Activated CD4-positive, alpha-beta T cell treated with anti-CD3 and anti-CD28 coated beads for 36 hours (primary cell): ENCODE measurements at regions of chr7 and their contacts with region 1.

Region 1: DNA sequence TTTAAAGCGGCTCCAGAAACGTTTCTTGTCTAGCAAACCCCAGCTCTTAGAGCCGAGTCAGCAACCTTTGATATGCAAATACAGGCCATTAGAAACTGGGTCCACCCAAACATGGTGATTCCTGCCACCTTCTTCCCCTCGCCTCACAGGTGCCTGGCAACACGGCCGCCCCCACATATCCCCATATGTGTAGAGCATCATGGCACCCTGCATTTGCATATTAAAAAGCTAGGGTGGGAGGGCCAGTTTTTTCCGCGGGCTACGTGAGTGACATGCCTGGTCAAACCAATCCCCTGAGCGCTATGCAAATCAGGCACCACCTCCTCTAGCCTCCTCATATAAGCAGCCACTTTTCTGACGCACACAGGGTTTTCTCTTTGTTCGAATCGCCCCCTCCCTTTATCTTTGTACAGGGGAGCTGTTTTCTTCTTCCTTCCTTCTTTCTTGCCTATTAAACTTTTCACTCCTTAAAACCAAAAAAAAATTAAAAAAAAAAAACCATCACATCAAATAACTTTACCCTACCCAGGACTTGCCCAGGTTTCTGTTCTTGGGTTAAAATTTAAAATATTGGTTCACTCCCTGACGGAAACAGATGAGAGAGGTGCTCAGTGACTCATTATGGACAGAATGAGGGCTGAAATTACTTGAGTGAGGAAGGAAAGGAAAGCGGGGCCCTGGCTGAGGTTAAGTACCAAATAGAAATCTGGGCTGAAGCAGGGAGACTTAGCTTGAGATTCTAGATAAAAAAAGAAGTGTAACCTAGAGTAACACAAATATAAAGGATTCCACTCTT is 59.8 kb downstream of the COA1 start:
- DNase-seq: peak; percentile 93
- ATAC-seq: peak; percentile 85
- H3K4me3 Mint-ChIP-seq: peak overlapping the region; percentile 68
- H3K27ac Mint-ChIP-seq: peak overlapping the region; percentile 94
- H3K4me1 Mint-ChIP-seq: peaks cover 84% of the 10 kb centered on the region
- H3K27me3 Mint-ChIP-seq: no peaks in the 10 kb centered on the region

Region 2: GRCh38 chr7:43568529-43568928 is 101.0 kb before region 1 on chr7:
- CTCF ChIA-PET with region 1: no interaction called
- POLR2A ChIA-PET with region 1: no interaction called
- intact Hi-C with region 1: no loop called
- DNase-seq: no peak
- ATAC-seq: no peak
- H3K4me3 Mint-ChIP-seq: no peak overlapping the region
- H3K27ac Mint-ChIP-seq: no peak overlapping the region
- H3K4me1 Mint-ChIP-seq: peaks cover 22% of the 10 kb centered on the region
- H3K27me3 Mint-ChIP-seq: peaks cover 4% of the 10 kb centered on the region

Region 3: GRCh38 chr7:43631559-43631958 is 37.9 kb before region 1 on chr7:
- CTCF ChIA-PET with region 1: no interaction called
- POLR2A ChIA-PET with region 1: no interaction called
- intact Hi-C with region 1: loop called in 1 of 2 experiments (anchors 1 kb)
- DNase-seq: no peak
- ATAC-seq: peak; percentile 70
- H3K4me3 Mint-ChIP-seq: no peak overlapping the region
- H3K27ac Mint-ChIP-seq: peak overlapping the region; percentile 79
- H3K4me1 Mint-ChIP-seq: peaks cover 90% of the 10 kb centered on the region
- H3K27me3 Mint-ChIP-seq: no peaks in the 10 kb centered on the region

Region 4: GRCh38 chr7:43658718-43659548 is 10.6 kb before region 1 on chr7:
- CTCF ChIA-PET with region 1: interaction called, 4 read pairs
- POLR2A ChIA-PET with region 1: interaction called, 3 read pairs
- intact Hi-C with region 1: loop called (anchors 1 kb)
- DNase-seq: peak; percentile 73
- ATAC-seq: peak; percentile 98
- H3K4me3 Mint-ChIP-seq: peak overlapping the region; percentile 34
- H3K27ac Mint-ChIP-seq: peak overlapping the region; percentile 96
- H3K4me1 Mint-ChIP-seq: peaks cover 70% of the 10 kb centered on the region
- H3K27me3 Mint-ChIP-seq: no peaks in the 10 kb centered on the region

Region 5: DNA sequence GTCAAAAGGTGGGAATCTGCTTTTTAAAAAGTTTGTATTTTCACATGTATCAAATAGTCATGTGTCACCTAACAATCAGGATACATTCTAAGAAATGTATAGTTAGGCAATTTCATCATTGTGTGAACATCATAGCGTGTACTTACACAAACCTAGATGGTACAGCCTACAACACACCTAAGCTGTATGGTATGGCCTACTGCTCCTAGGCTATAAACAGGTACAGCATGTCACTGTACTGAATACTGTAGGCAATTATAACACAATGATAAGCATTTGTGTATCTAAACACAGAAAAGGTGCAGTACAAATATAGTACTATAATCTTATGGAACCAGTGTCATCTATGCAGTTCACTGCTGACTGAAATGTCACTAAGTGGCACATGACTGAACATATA is 42.0 kb after region 1 on chr7:
- CTCF ChIA-PET with region 1: no interaction called
- POLR2A ChIA-PET with region 1: no interaction called
- intact Hi-C with region 1: no loop called
- DNase-seq: no peak
- ATAC-seq: no peak
- H3K4me3 Mint-ChIP-seq: no peak overlapping the region
- H3K27ac Mint-ChIP-seq: no peak overlapping the region
- H3K4me1 Mint-ChIP-seq: peaks cover 15% of the 10 kb centered on the region
- H3K27me3 Mint-ChIP-seq: no peaks in the 10 kb centered on the region